ENCODE measurements at regions of chr7 and their contacts with region 1.

Region 1: DNA sequence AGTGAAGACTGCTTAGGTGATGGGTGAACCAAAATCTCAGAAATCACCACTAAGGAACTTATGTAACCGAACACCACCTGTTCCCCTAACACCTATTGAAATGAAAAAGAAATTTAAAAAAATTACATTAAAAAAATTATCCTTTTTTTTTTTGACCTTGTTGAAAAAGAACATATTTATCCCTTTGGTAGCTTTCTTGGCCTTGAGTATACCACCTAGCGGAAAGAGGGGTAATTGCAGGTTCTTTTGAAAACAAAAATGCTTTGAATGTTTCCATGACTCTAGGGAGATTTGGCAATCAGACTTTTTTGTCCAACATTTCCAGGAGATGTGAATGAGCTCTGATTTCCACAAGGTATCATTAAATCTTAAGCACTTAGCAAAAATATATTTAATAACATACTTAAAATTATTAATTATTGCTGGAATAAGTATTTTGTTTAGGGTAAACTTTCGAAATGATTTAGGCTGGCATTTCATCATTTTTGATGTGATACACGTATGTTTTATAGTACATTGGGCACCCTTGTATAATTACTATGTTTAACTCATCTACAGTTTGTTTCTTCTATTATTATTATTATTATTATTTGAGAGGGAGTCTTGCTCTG is 47.0 kb upstream of the ELMO1 start:
- DNase-seq: no peak
- H3K4me3 ChIP-seq: no peak overlapping the region
- H3K27ac ChIP-seq: no peak overlapping the region
- H3K4me1 ChIP-seq: no peaks in the 10 kb centered on the region
- H3K27me3 ChIP-seq: no peaks in the 10 kb centered on the region
- CTCF ChIP-seq: peak; percentile 38 to 67 (median 64)
- POLR2A ChIP-seq: no peak

Region 2: DNA sequence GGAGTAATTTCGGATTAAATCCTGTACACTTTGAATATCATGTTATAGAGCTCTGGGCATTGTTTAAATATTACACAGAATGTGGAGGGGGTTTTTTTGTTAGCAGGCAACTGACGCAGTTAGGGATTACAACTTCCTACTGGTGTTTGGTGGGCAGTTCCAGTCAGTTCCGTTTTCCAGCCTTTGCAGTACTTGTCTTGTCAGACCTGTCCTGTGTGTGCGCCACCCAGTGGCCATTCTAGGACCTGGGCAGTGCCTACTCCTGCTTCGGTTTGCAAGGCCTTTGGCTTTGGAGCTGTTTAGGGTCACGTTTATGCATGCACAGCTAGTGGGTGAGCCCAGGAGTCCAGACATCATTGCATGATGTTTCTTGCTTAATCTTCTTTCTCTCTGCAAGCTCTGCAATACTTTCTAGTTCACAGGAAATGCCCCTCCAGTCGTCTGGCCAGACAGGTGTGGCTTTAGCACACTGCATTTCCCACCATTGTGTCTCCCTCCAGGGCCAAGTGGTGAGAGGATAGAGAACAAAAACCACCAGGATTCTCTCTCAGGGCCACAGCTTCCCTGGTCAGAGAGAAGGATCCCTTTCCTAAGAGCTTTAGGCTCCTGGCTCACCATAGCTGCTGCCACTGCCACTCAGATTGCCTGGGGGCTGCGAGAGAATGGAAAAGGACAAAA is 874.3 kb after region 1 on chr7:
- intact Hi-C with region 1: loop called (anchors 5 kb)
- DNase-seq: peak; percentile 57 to 81
- H3K4me3 ChIP-seq: peak overlapping the region in 1 of 3 donors; percentile 50
- H3K27ac ChIP-seq: no peak overlapping the region
- H3K4me1 ChIP-seq: no peaks in the 10 kb centered on the region
- H3K27me3 ChIP-seq: no peaks in the 10 kb centered on the region
- CTCF ChIP-seq: peak in 2 of 3 donors; percentile 45 to 69
- POLR2A ChIP-seq: no peak

Measured in breast epithelium (tissue), 4 donors.